Natural killer cell (primary cell): ENCODE measurements at regions of chr9 and their contacts with region 1.

Region 1: GRCh38 chr9:21812946-21813568 is 10.6 kb downstream of the MTAP start:
- DNase-seq: peak; percentile 70 to 85
- ATAC-seq: peak; percentile 81 to 89 (median 83)
- H3K4me3 ChIP-seq: no peak overlapping the region
- H3K4me3 Mint-ChIP-seq: no peak overlapping the region
- H3K27ac ChIP-seq: no peak overlapping the region
- H3K27ac Mint-ChIP-seq: no peak overlapping the region
- H3K4me1 ChIP-seq: peaks cover 8% of the 10 kb centered on the region
- H3K4me1 Mint-ChIP-seq: peaks cover 5 to 6% of the 10 kb centered on the region in 2 donors
- H3K27me3 ChIP-seq: no peaks in the 10 kb centered on the region
- H3K27me3 Mint-ChIP-seq: no peaks in the 10 kb centered on the region
- CTCF ChIP-seq: peak; percentile 83

Region 2: GRCh38 chr9:22008736-22009562 is 195.9 kb after region 1 on chr9 and contains the start of gene CDKN2B:
- intact Hi-C with region 1: loop called (anchors 1 kb)
- DNase-seq: peak; percentile 68 to 82
- ATAC-seq: peak; percentile 72 to 81 (median 79)
- H3K4me3 ChIP-seq: peak within 1 kb of the TSS; percentile 72
- H3K4me3 Mint-ChIP-seq: peak within 1 kb of the TSS; percentile 89
- H3K27ac ChIP-seq: no peak within 1 kb of the TSS
- H3K27ac Mint-ChIP-seq: peak within 1 kb of the TSS in 1 of 2 donors; percentile 45
- H3K4me1 ChIP-seq: peaks cover 23% of the 10 kb centered on the region
- H3K4me1 Mint-ChIP-seq: peaks cover 21 to 32% of the 10 kb centered on the region in 2 donors
- H3K27me3 ChIP-seq: peaks cover 60% of the 10 kb centered on the region
- H3K27me3 Mint-ChIP-seq: peaks cover 40 to 42% of the 10 kb centered on the region in 2 donors
- CTCF ChIP-seq: peak; percentile 95
- total RNA-seq, gene CDKN2B: 0.16 to 0.30 TPM in 2 of 3 donors, not detected in the other

Region 3: GRCh38 chr9:22037954-22038690 is 225.1 kb after region 1 on chr9:
- intact Hi-C with region 1: loop called (anchors 1 kb)
- DNase-seq: peak in 1 of 2 donors; percentile 55
- ATAC-seq: peak in 2 of 3 donors; percentile 44 to 54
- H3K4me3 ChIP-seq: no peak overlapping the region
- H3K4me3 Mint-ChIP-seq: no peak overlapping the region
- H3K27ac ChIP-seq: no peak overlapping the region
- H3K27ac Mint-ChIP-seq: no peak overlapping the region
- H3K4me1 ChIP-seq: peaks cover 6% of the 10 kb centered on the region
- H3K4me1 Mint-ChIP-seq: peaks cover 9 to 10% of the 10 kb centered on the region in 2 donors
- H3K27me3 ChIP-seq: peaks cover 3% of the 10 kb centered on the region
- H3K27me3 Mint-ChIP-seq: peaks cover 0 to 12% of the 10 kb centered on the region in 2 donors
- CTCF ChIP-seq: peak; percentile 55

Region 4: GRCh38 chr9:22119537-22120158 is 306.6 kb after region 1 on chr9:
- intact Hi-C with region 1: loop called (anchors 5 kb)
- DNase-seq: peak in 1 of 2 donors; percentile 48
- ATAC-seq: no peak
- H3K4me3 ChIP-seq: no peak overlapping the region
- H3K4me3 Mint-ChIP-seq: no peak overlapping the region
- H3K27ac ChIP-seq: no peak overlapping the region
- H3K27ac Mint-ChIP-seq: no peak overlapping the region
- H3K4me1 ChIP-seq: no peaks in the 10 kb centered on the region
- H3K4me1 Mint-ChIP-seq: no peaks in the 10 kb centered on the region
- H3K27me3 ChIP-seq: no peaks in the 10 kb centered on the region
- H3K27me3 Mint-ChIP-seq: peaks cover 5 to 19% of the 10 kb centered on the region in 2 donors
- CTCF ChIP-seq: no peak

Region 5: DNA sequence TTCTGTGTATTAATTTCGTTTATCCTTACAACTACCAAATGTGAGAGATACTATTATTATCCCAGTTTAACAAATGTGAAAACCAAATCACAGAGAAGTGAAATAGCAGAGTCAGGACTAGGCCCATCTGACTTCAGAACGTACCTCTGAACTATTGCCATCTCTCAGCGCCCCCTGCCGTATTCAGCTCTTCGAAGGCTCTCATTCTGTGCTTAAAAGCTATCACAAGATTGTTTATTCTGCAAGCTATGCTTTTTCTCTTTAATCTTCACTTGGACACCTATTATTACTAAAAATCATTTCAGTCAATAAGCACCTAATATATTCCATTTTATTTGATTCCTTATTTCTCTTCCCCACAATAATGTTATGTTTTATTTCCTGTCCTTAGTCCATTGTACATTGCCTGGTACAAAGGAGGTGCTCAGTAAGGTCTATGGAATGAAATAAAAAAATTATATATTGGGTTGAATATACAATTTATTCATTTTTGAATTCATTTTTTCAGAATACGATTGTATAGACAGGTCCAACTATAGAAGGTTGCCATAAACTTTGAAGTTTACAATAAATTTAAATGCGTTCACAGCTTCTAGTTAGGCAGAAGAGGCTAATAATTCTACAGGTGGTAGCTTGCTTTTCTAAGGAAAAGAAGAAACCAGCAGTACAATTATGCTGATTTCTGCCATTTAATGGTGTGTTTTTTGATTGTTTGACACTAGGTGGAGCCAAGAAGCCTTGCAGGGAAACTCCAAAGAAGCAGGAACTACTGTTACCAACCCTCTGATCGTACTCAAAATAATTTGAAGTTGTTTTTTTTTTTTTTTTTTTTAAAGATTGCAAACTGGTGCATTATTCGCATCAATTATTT is 431.3 kb after region 1 on chr9:
- intact Hi-C with region 1: loop called (anchors 5 kb)
- DNase-seq: peak in 1 of 2 donors; percentile 57
- ATAC-seq: no peak
- H3K4me3 ChIP-seq: no peak overlapping the region
- H3K4me3 Mint-ChIP-seq: no peak overlapping the region
- H3K27ac ChIP-seq: no peak overlapping the region
- H3K27ac Mint-ChIP-seq: no peak overlapping the region
- H3K4me1 ChIP-seq: no peaks in the 10 kb centered on the region
- H3K4me1 Mint-ChIP-seq: no peaks in the 10 kb centered on the region
- H3K27me3 ChIP-seq: no peaks in the 10 kb centered on the region
- H3K27me3 Mint-ChIP-seq: peaks cover 0 to 5% of the 10 kb centered on the region in 2 donors
- CTCF ChIP-seq: no peak

Region 6: GRCh38 chr9:22452415-22453010 is 639.5 kb after region 1 on chr9:
- intact Hi-C with region 1: loop called (anchors 1 kb)
- DNase-seq: peak in 1 of 2 donors; percentile 62
- ATAC-seq: peak; percentile 37 to 50 (median 49)
- H3K4me3 ChIP-seq: no peak overlapping the region
- H3K4me3 Mint-ChIP-seq: no peak overlapping the region
- H3K27ac ChIP-seq: no peak overlapping the region
- H3K27ac Mint-ChIP-seq: no peak overlapping the region
- H3K4me1 ChIP-seq: no peaks in the 10 kb centered on the region
- H3K4me1 Mint-ChIP-seq: no peaks in the 10 kb centered on the region
- H3K27me3 ChIP-seq: peaks cover 6% of the 10 kb centered on the region
- H3K27me3 Mint-ChIP-seq: peaks cover 4 to 20% of the 10 kb centered on the region in 2 donors
- CTCF ChIP-seq: peak; percentile 58